ENCODE measurements at regions of chr5 and their contacts with region 1.

Region 1: DNA sequence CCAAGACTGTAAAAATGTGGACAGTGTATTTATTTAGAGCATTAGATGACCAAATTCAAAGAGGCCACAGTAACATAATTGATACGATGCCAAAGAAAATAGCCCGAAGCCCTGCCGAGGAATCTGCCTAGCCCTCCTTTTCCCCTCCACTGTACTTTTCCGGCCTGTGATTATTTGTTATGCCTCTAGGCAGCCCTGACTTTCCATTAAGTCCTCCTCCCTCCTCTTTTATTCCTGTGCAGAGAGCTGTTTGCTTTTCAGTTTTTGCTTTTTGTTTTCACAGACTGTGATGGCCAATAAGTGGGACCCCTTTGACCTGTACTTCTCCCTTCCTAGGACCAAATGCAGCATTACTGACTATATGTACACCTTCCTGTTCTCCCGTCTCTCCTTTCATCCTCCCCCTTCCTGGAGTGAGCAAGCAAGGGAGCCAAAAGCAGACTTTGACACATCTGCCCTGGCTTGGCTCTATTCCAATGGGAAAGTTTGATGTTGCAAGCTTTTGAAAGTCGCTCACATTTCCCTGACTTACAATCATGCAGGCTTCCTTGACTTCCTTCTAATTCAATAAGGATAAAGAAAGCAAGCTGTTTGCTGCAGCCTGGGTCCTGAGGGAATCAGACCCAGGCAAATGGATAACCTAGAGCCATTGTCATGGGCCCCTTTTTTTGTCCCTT is 76.1 kb downstream of the NREP start:
- DNase-seq: peak; percentile 90
- ATAC-seq: peak; percentile 98
- H3K4me3 ChIP-seq: peak overlapping the region in 1 of 3 experiments; percentile 37; a peak in 2 of 6 replicates
- H3K27ac ChIP-seq: peak overlapping the region; percentile 0
- H3K4me1 ChIP-seq: peaks cover 25% of the 10 kb centered on the region
- H3K27me3 ChIP-seq: peaks cover 0 to 7% of the 10 kb centered on the region in 2 experiments; a peak in 2 of 5 replicates
- CTCF ChIP-seq: no peak
- EP300 ChIP-seq: no peak
- POLR2A ChIP-seq: no peak
- RAD21 ChIP-seq: no peak

Region 2: DNA sequence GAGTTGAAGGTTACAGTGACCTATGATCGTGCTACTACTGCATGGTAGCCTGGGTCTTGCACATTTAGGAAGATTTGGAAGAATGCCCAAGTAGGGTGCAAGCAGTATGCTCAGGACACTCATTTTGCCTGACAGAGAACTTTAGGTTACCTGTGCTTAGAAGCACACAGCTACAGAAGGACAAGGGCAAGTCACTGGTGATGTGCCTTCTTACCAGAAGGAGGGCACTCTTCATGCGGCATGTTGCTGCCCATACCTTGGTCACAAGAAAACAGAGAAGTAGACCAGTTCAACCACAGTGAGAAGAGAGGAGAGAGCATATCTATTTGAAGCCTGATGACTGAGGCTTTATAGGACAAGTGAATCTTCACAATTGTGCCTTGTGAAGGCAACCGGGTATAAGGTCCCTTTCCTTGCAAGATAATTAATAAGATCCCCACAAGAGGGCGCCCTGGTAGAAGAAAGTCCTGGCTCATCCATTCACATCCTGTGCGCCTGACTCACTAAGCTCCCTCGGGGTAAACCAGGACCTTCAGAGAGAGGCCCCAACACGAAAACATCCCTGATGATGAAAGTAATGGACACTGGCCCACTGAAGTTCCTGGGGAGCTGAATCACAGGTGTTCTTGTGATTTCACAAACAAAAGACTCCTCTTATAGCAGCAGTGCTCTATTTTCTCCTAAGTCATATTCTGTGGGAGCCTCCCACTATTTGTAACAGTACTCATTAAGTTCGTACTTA is 130.4 kb before region 1 on chr5:
- CTCF ChIA-PET with region 1: no interaction called
- POLR2A ChIA-PET with region 1: no interaction called
- in situ Hi-C with region 1: no loop called
- intact Hi-C with region 1: loop called (anchors 5 kb)
- DNase-seq: peak; percentile 63
- ATAC-seq: peak; percentile 97
- H3K4me3 ChIP-seq: no peak overlapping the region
- H3K27ac ChIP-seq: no peak overlapping the region
- H3K4me1 ChIP-seq: no peaks in the 10 kb centered on the region
- H3K27me3 ChIP-seq: no peaks in the 10 kb centered on the region
- CTCF ChIP-seq: peak; percentile 77
- EP300 ChIP-seq: no peak
- POLR2A ChIP-seq: no peak
- RAD21 ChIP-seq: peak; percentile 64

Region 3: DNA sequence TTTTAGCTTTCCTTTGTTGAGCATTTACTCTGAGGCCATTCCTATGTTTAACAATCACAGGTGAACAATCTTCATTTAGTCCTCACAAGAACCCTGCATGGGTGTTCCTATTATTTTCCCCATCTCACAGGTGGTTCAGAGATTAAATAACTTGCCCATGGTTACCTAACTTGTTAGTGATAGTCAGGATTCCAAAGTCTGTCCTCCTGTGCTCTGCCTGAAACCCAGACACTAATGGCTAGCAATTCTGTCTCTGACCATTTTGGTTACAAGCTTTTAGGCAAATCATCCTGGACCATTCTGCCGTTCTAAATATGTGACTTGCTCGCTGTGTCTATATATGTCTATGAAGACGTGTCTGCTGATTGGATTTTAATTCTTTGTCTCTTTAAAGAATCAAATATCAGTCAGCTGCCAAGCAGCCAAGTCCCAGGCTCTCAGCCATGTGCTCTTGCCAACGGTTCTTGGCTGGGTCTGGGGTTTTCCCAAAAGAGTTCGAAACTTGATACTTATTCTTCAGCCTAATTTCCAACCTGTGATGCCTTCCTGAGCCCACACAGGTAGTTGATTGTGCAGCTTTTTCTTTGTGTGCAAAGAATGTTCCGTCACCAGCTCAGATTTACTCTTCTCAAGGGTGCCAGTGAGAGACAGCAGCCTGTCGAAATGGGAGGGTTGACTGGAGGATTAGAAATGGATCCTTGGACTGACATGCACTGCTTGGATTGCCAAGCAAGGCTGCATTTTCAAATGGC is 45.5 kb before region 1 on chr5:
- CTCF ChIA-PET with region 1: no interaction called
- POLR2A ChIA-PET with region 1: no interaction called
- in situ Hi-C with region 1: no loop called
- intact Hi-C with region 1: no loop called
- DNase-seq: no peak
- ATAC-seq: no peak
- H3K4me3 ChIP-seq: no peak overlapping the region
- H3K27ac ChIP-seq: no peak overlapping the region
- H3K4me1 ChIP-seq: no peaks in the 10 kb centered on the region
- H3K27me3 ChIP-seq: peaks cover 0 to 3% of the 10 kb centered on the region in 2 experiments; a peak in 1 of 5 replicates
- CTCF ChIP-seq: no peak
- EP300 ChIP-seq: no peak
- POLR2A ChIP-seq: no peak
- RAD21 ChIP-seq: no peak

Region 4: DNA sequence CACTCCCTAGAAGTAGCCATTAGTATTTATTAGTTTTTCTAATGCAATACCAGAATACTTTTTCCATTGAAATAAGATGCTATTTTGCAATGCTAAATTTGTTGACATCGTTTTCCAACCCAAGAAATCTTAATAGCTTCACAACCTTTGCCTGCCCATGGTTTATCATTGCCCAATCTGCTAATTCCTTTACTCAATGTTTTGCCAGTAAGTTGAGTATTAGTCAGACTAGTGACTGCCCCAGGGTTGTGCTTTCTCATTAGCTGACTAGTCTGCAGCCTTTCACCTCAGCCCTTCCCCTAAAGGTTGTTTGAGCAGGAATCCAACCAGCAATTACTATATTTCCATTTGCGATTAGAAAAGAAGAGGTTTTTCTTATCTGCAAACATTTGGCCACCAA is 13.3 kb after region 1 on chr5:
- CTCF ChIA-PET with region 1: no interaction called
- POLR2A ChIA-PET with region 1: no interaction called
- in situ Hi-C with region 1: no loop called
- intact Hi-C with region 1: no loop called
- DNase-seq: no peak
- ATAC-seq: no peak
- H3K4me3 ChIP-seq: no peak overlapping the region
- H3K27ac ChIP-seq: no peak overlapping the region
- H3K4me1 ChIP-seq: no peaks in the 10 kb centered on the region
- H3K27me3 ChIP-seq: no peaks in the 10 kb centered on the region
- CTCF ChIP-seq: no peak
- EP300 ChIP-seq: no peak
- POLR2A ChIP-seq: no peak
- RAD21 ChIP-seq: no peak

Region 5: GRCh38 chr5:111810112-111810511 is 129.2 kb after region 1 on chr5:
- CTCF ChIA-PET with region 1: no interaction called
- POLR2A ChIA-PET with region 1: no interaction called
- in situ Hi-C with region 1: no loop called
- intact Hi-C with region 1: loop called (anchors 10 kb)
- DNase-seq: no peak
- ATAC-seq: no peak
- H3K4me3 ChIP-seq: no peak overlapping the region
- H3K27ac ChIP-seq: no peak overlapping the region
- H3K4me1 ChIP-seq: no peaks in the 10 kb centered on the region
- H3K27me3 ChIP-seq: no peaks in the 10 kb centered on the region
- CTCF ChIP-seq: no peak
- EP300 ChIP-seq: no peak
- POLR2A ChIP-seq: no peak
- RAD21 ChIP-seq: no peak

Measured in HepG2 (cell line).